Ovary (tissue), 10 donors: ENCODE measurements at regions of chr14 and their contacts with region 1.

Region 1: GRCh38 chr14:96100161-96101029 is 61.2 kb downstream of the C14orf132 start:
- DNase-seq: peak; percentile 48 to 69 (median 51)
- H3K4me3 ChIP-seq: no peak overlapping the region
- H3K27ac ChIP-seq: no peak overlapping the region
- H3K4me1 ChIP-seq: no peaks in the 10 kb centered on the region
- H3K27me3 ChIP-seq: no peaks in the 10 kb centered on the region
- CTCF ChIP-seq: peak in 2 of 3 donors; percentile 47 to 59
- EP300 ChIP-seq: no peak
- POLR2A ChIP-seq: no peak

Region 2: DNA sequence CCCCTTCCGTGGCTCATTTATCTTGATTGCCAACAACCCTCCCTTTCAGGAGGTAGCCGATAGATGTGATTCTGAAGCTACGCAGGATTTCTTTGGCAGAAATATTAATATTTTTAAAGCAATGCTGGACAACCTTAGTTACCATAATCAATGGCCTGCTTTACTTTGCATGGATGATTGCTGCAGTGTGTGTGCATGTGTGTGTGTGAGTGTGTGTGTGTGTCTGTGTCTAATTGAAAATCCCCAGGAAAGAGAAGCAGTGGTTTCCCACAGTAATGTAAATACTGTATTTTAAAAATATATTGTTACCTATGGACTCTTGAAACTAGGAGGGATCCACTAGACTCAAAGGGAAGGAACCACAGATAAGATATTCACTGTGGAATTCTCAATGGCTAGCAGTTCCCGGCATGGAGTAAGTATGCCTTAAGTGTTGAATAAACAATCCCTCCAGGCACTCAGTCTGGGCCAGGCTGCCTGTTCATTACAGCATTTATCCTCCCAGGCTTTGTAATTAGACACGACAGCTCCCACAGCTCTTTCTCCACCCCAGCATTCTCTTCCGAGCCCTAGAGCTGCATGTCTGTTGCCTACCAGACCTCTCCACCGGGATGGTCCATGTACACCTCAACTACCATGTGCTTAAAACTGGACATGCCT is 83.8 kb before region 1 on chr14:
- intact Hi-C with region 1: no loop called
- DNase-seq: no peak
- H3K4me3 ChIP-seq: no peak overlapping the region
- H3K27ac ChIP-seq: no peak overlapping the region
- H3K4me1 ChIP-seq: no peaks in the 10 kb centered on the region
- H3K27me3 ChIP-seq: no peaks in the 10 kb centered on the region
- CTCF ChIP-seq: no peak
- EP300 ChIP-seq: no peak
- POLR2A ChIP-seq: no peak

Region 3: DNA sequence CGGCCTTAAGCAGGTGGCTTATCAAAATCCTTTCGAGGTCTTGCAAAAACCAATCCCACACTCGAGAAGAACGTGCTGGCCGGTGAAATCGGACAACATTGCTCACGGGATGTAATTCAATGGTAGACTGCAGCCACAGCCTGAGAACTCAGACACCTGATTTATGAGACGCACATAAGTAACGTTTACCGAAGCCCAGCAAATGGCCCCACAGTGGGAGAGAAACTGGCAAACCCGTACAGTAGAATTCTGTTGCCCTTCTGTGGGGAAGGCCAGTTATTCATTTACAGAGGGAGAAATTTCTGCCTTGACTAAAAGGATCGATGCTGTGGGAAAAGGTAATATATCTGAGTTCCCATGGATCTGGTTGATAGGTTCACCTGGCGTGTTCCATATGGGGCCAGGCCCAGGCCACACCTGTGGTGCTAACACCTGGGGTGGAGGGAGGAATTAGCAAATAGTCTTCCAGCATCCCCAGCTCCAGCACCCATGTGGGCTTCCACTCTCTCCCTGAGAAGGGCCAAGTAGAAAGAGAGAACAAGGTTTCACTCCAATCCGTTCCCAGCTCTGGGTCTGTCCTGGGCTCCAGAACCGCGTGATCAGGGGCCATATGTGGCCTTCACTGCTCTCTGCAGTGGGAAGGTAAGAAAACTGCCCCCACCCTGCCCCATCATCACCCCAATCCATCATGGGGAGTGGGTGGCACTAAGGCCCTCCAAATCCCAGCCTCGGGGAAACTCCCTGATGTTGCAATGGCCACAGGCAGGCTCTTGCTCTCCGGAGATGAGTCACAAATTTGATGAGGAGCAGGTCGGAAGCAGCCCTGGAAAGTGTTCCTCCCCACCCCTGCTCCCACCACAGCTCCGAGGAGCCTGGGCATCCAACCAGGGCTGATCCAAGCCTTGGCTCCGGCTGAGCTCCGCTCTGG is 168.3 kb after region 1 on chr14:
- intact Hi-C with region 1: loop called in 2 of 4 experiments (anchors 10 kb)
- DNase-seq: peak in 4 of 5 donors; percentile 17 to 41 (median 31)
- H3K4me3 ChIP-seq: no peak overlapping the region
- H3K27ac ChIP-seq: no peak overlapping the region
- H3K4me1 ChIP-seq: no peaks in the 10 kb centered on the region
- H3K27me3 ChIP-seq: no peaks in the 10 kb centered on the region
- CTCF ChIP-seq: no peak
- EP300 ChIP-seq: no peak
- POLR2A ChIP-seq: no peak

Region 4: GRCh38 chr14:96275177-96276112 is 175.1 kb after region 1 on chr14:
- intact Hi-C with region 1: loop called in 3 of 4 experiments (anchors 5 to 10 kb)
- DNase-seq: peak; percentile 70 to 86 (median 79)
- H3K4me3 ChIP-seq: no peak overlapping the region
- H3K27ac ChIP-seq: no peak overlapping the region
- H3K4me1 ChIP-seq: no peaks in the 10 kb centered on the region
- H3K27me3 ChIP-seq: no peaks in the 10 kb centered on the region
- CTCF ChIP-seq: peak; percentile 56 to 70 (median 62)
- EP300 ChIP-seq: no peak
- POLR2A ChIP-seq: no peak

Region 5: GRCh38 chr14:96380735-96381134 is 280.3 kb after region 1 on chr14:
- intact Hi-C with region 1: no loop called
- DNase-seq: no peak
- H3K4me3 ChIP-seq: no peak overlapping the region
- H3K27ac ChIP-seq: no peak overlapping the region
- H3K4me1 ChIP-seq: no peaks in the 10 kb centered on the region
- H3K27me3 ChIP-seq: no peaks in the 10 kb centered on the region
- CTCF ChIP-seq: no peak
- EP300 ChIP-seq: no peak
- POLR2A ChIP-seq: no peak

Region 6: DNA sequence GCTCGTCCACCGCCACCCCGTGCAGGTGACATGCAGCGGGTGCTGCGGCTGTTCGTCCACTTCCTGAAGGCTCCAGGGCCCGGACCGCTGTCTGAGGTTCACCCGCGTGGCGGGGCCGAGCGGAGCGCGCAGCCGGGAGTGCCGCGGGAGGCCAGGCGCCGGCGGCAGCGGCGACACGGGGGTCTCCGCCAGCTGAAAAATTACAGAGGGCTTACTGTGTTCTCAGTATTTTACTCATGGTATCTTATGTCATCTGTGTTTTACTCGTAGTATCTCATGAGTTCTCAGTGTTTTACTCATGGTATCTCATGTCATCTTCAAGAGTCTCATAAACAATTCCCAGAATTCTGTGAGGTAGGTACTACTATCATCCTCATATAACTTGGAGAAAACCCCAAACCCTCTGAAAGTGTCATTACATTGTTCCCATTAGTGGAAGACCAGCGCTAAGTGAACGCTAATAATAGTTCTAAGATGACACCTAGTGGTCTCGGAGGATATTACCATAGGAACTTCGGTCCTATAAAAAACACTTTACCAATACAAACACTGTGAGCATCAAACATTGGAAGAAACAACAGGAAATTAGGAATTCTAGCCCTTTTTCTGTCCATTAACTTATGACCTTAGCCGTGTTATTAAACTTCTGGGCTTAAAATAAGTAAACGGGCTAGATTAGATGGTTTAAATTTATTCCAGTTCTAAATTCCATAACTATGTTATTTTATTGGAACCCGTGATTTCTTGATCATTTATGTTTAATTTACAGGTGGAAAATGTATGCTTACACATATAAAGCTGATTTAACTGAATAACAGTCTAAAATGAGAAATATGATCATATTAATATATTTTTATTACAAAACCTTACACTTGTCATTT is 324.0 kb after region 1 on chr14:
- intact Hi-C with region 1: loop called in 1 of 4 experiments (anchors 10 kb)
- DNase-seq: peak in 2 of 5 donors; percentile 20 to 43
- H3K4me3 ChIP-seq: peak overlapping the region; percentile 6
- H3K27ac ChIP-seq: no peak overlapping the region
- H3K4me1 ChIP-seq: no peaks in the 10 kb centered on the region
- H3K27me3 ChIP-seq: no peaks in the 10 kb centered on the region
- CTCF ChIP-seq: peak; percentile 50 to 69 (median 66)
- EP300 ChIP-seq: no peak
- POLR2A ChIP-seq: no peak

Region 7: DNA sequence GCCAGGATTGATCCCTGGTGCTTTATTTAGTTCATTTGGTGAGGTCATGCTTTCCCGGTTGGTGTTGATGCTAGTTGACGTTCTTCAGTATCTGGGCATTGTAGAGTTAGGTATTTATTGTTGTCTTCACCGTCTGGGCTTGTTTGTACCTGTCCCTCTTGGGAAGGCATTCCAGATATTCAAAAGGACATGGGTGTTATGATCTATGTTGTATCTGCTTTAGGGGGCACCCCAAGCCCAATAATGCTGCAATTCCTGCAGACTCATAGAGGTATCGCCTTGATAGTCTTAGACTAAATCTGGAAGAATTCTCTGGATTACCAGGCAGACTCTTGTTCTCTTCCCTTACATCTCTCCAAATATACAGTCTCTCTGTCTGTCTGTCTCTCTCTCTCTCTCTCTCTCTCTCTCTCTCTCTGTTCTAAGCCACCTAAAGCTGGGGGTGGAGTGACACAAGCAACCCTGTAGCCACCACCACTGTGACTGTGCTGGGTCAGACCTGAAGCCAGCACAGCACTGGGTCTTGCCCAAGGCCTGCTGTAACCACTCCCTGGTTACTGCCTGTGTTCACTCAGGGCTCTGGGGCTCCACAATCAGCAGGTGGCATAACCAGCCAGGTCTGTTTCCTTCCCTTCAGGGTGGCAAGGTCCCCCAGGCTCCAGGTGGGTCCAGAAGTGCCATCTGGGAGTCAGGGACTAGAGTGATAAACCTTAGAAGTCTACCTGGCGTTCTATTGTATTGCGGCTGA is 333.8 kb after region 1 on chr14:
- intact Hi-C with region 1: loop called in 2 of 4 experiments (anchors 10 kb)
- DNase-seq: no peak
- H3K4me3 ChIP-seq: no peak overlapping the region
- H3K27ac ChIP-seq: no peak overlapping the region
- H3K4me1 ChIP-seq: no peaks in the 10 kb centered on the region
- H3K27me3 ChIP-seq: no peaks in the 10 kb centered on the region
- CTCF ChIP-seq: no peak
- EP300 ChIP-seq: no peak
- POLR2A ChIP-seq: no peak